ENCODE measurements at regions of chr15 and their contacts with region 1.

Region 1: DNA sequence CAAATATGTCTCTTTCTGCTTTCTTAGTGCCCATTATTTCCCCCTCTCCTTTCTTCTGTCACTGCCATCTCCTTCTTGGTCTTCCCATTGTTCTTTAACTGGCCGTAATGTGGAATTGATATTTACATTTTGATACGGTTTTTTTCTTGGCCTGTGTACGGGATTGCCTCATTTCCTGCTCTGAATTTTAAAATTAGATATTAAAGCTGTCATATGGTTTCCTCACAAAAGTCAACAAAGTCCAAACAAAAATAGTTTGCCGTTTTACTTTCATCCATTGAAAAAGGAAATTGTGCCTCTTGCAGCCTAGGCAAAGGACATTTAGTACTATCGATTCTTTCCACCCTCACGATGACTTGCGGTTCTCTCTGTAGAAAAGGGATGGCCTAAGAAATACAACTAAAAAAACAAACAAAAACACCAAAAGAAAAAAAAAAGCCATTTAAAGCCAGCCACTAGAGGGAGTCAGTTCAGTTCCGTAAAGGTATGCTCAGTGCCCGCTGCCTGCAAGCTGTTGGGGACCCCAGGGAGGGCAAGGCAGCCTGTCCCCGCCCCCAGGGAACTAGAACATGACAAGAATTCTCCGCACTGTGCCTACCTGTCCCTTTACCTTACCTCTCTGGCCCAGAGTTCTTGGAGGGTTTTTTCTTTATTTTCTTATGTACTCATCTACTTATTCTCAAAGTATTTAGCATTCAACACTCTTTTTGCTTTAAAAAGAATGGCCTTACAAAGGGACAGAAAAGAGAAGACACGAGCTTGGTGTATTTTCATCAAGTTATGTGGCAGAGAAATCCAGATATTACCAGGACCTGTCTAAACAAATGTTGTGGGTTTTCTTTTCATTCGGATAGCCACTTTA is 30.0 kb upstream of the NR2E3 start:
- DNase-seq: no peak
- H3K4me3 ChIP-seq: no peak overlapping the region
- H3K27me3 ChIP-seq: no peaks in the 10 kb centered on the region
- CTCF ChIP-seq: peak; percentile 78

Region 2: DNA sequence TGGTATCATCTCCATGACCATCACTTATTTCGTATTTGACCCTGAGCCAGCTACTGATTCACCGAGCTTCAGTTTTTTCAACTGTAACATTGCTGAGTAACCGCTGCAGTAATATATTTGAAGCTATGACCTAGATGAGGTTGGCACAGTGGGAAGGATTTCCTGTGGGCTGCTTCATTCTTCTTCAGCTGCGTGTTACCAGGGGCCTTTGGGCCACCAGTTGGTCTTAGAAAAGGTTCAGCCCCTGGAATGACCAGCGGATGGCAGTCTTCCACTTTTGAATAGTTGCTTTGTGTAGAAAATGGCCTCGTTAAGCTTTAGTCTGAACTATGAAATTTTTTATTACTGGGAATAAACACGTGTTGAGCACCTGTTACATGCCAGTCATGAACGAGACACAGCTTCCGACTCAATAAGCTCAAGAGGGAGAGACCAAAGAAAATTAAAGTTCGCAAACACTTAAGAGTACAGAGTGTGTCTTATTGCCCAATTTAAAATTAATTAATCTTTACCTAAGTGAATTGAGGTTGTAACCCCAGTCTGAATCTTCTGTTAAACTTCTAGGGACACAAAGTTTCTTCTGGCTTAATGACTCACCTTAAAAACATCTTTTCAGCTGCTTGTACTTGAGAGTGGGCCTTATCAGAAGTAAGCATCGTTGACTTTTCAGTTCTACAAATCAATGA is 27.6 kb before region 1 on chr15:
- CTCF ChIA-PET with region 1: interaction called, 21 read pairs
- POLR2A ChIA-PET with region 1: no interaction called
- DNase-seq: peak; percentile 92
- H3K4me3 ChIP-seq: no peak overlapping the region
- H3K27me3 ChIP-seq: no peaks in the 10 kb centered on the region
- CTCF ChIP-seq: peak; percentile 67

Region 3: GRCh38 chr15:71761649-71762369 is 18.5 kb before region 1 on chr15:
- CTCF ChIA-PET with region 1: interaction called, 13 read pairs
- POLR2A ChIA-PET with region 1: no interaction called
- DNase-seq: peak; percentile 67
- H3K4me3 ChIP-seq: no peak overlapping the region
- H3K27me3 ChIP-seq: no peaks in the 10 kb centered on the region
- CTCF ChIP-seq: no peak

Region 4: DNA sequence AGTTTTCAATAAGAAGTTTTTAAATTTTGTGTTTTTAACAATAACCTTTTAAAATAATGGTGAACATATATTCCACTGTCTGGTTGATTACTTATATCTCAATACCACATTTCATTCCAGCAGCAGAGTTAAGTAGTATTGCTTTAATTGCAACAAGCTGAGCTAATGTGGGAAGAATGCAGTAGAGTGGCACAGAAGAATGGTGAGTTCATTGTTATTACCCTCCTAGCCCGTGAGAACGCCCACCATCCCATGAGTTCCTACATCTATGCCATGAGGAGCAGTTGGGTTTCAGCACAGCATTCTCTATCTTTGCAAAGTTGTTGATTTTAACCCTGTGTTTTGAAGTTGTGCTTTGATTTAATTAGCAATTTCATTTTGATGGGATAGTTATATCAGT is 12.2 kb after region 1 on chr15:
- CTCF ChIA-PET with region 1: interaction called, 26 read pairs
- POLR2A ChIA-PET with region 1: no interaction called
- DNase-seq: peak; percentile 41
- H3K4me3 ChIP-seq: no peak overlapping the region
- H3K27me3 ChIP-seq: no peaks in the 10 kb centered on the region
- CTCF ChIP-seq: no peak

Region 5: DNA sequence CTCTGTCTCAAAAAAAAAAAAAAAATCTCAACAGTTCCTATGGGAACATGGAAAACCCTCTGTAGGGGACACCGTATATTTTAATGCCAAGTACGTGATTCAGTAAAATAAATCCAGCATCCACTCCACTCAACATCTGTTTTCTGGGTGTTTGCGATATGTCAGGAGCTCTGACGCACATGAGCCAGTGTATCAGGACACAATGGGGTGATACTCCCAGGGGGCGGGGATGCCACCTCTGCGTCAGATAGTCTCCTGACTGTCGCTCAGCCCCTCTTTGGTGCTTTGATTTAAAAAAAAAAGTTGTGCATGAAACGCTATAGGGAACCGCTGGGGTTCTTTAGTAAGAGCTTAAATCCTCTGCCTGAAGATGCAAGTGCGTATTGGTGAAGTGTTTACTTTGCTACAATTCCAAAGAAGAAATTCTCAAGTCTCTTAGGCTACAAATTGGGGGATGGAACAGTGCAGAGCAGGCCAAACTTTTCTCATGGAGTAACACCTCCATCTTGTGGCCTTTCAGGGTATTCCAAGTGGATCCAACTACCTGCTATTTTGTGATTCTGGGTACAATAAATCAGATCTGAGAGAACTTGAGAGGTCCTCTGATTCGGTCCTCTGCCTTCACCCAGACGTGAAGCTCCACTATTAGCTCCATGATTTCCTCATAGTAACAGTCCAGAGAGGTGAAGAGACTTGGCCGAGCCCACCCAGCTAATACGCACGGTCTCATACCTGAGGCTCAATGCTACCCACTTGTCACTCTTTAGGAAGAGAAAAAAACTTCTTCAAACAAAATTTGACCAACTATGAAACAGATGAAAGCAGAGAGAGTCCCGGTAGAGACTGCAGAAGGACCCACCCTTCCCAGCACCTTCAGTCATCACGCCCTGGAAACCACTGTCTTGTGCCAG is 20.7 kb after region 1 on chr15:
- CTCF ChIA-PET with region 1: interaction called, 13 read pairs
- POLR2A ChIA-PET with region 1: no interaction called
- DNase-seq: no peak
- H3K4me3 ChIP-seq: no peak overlapping the region
- H3K27me3 ChIP-seq: no peaks in the 10 kb centered on the region
- CTCF ChIP-seq: peak; percentile 83

Measured in BJ (cell line).